ENCODE measurements at regions of chr1 and their contacts with region 1.

Region 1: GRCh38 chr1:117895482-117896114 is 33.8 kb downstream of the GDAP2 start:
- DNase-seq: peak in 1 of 2 donors; percentile 82
- H3K4me3 ChIP-seq: no peak overlapping the region
- H3K27ac ChIP-seq: no peak overlapping the region
- H3K4me1 ChIP-seq: no peaks in the 10 kb centered on the region
- H3K27me3 ChIP-seq: no peaks in the 10 kb centered on the region
- CTCF ChIP-seq: peak; percentile 44 to 79 (median 55)

Region 2: DNA sequence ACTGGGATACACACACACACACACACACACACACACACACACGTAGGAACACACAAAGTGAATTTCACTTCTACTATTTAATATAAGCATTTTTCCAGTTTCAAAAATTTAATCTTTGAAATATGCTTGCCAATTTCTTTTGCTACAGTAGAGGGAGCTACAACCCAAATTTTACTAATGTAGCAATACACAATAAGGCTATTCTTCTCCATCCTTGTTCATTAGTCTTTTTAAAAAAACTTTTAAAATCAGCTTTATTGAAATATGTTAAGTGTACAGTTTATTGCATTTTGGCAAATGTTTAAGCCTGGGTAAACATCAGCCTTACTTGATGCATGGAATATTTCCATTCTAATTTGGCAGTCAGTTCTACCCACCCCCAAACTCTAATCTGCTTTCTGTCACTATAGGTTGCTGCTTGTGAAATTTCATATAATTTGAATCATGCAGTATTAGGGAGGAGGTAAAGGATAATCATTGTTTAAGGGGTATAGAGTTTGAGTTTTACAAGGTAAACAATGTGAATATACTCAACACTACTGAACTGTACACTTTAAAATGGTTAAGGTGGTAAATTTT is 382.8 kb before region 1 on chr1:
- intact Hi-C with region 1: loop called (anchors 5 kb)
- DNase-seq: no peak
- H3K4me3 ChIP-seq: no peak overlapping the region
- H3K27ac ChIP-seq: no peak overlapping the region
- H3K4me1 ChIP-seq: no peaks in the 10 kb centered on the region
- H3K27me3 ChIP-seq: no peaks in the 10 kb centered on the region
- CTCF ChIP-seq: peak; percentile 37 to 62 (median 50)

Region 3: DNA sequence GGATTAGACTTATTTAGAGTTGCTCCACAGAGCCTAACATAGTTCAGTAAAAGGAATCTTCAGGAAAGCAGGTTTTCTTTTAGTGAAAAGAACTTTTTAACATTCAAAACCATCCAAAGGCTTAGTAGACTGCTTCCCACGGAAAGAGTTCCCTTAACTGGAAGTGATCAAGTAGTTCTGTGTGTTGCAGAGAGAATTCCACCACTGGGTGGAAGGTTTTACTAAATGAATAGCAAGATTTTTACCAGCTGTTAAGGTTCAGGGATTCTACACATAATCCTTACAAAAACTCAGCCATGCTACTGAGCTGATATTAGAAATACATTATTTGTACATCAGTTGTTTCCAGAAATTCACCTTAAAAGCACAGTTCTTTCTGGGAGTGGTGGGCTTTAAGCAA is 85.8 kb before region 1 on chr1:
- intact Hi-C with region 1: loop called (anchors 5 kb)
- DNase-seq: no peak
- H3K4me3 ChIP-seq: no peak overlapping the region
- H3K27ac ChIP-seq: peak overlapping the region in 1 of 2 donors; percentile 5
- H3K4me1 ChIP-seq: peaks cover 0 to 16% of the 10 kb centered on the region in 2 donors
- H3K27me3 ChIP-seq: no peaks in the 10 kb centered on the region
- CTCF ChIP-seq: peak in 1 of 3 experiments; percentile 28

Region 4: DNA sequence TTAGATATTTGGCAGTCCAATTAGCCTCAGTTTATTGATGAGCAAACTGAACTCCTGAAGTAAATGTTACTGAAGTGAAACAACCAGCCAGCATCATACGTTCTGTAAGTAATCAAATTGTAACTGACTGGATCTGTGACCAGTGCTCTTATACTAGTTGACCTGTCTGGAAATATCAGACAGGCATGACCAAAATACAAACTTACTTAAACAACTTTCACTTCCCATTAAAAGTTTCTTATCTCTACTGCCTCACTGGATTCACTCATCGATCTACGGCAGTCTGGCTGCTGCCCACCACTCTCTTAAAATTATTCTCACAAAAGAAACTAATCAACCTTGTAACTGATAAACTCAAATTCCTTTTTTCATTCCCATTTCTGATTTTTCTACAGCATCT is 90.4 kb after region 1 on chr1:
- intact Hi-C with region 1: no loop called
- DNase-seq: no peak
- H3K4me3 ChIP-seq: no peak overlapping the region
- H3K27ac ChIP-seq: no peak overlapping the region
- H3K4me1 ChIP-seq: no peaks in the 10 kb centered on the region
- H3K27me3 ChIP-seq: no peaks in the 10 kb centered on the region
- CTCF ChIP-seq: no peak